T-cell (primary cell): ENCODE measurements at regions of chr1 and their contacts with region 1.

Region 1: DNA sequence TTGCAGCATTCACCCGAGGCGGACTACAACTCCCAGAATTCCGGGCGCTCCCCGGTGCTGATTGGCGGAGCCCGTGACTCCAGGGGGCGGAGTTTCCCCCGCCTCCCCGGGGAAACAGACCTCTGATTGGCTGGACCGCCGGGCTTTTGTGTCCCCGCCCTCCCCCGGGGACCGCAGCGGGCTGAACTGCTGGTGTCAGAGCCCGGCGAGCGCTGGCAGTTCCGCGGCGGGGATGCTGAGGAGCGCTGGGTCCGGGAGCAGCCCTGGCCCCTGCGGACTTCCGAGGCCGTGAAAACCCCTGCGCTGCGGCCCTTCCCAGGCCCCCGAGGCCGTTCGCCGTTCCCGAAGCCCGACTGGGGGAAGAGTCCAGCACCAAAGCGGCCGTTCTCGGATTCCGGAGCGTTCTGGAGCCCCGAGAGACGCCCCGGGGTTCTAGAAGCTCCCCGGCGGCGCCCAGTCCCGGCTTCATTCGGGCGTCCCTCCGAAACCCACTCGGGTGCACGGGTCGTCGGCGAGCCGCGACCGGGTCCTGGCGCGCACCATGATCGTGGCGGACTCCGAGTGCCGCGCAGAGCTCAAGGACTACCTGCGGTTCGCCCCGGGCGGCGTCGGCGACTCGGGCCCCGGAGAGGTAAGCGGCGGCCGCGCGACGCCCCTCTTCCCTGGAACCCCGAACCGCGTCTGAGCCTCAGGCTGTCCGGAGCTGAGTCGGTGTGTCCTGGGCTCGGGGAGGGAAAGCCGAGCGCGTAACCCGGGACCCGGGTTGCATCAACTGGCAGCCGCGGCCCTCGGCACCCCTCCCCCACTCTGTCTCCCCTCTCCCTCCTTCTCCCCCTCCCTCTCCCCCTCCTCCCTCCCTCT is at the start of gene SESN2:
- DNase-seq: peak; percentile 95 to 99 (median 98)
- ATAC-seq: peak; percentile 95 to 99 (median 97)
- H3K4me3 ChIP-seq: peak within 1 kb of the TSS; percentile 75 to 99
- H3K4me3 Mint-ChIP-seq: peak within 1 kb of the TSS; percentile 77 to 82 (median 79)
- H3K27ac ChIP-seq: peak within 1 kb of the TSS; percentile 34
- H3K27ac Mint-ChIP-seq: peak within 1 kb of the TSS; percentile 67 to 79
- H3K4me1 ChIP-seq: peaks cover 19 to 60% of the 10 kb centered on the region in 2 experiments
- H3K4me1 Mint-ChIP-seq: peaks cover 41 to 52% (median 44%) of the 10 kb centered on the region in 3 donors
- H3K27me3 ChIP-seq: peaks cover 0 to 5% of the 10 kb centered on the region in 2 experiments
- H3K27me3 Mint-ChIP-seq: no peaks in the 10 kb centered on the region
- total RNA-seq, gene SESN2: 7.1 to 11.9 (median 8.6) TPM

Region 2: GRCh38 chr1:28175955-28176485 is 83.5 kb before region 1 on chr1:
- CTCF ChIA-PET with region 1: no interaction called
- POLR2A ChIA-PET with region 1: no interaction called
- DNase-seq: no peak
- ATAC-seq: no peak
- H3K4me3 ChIP-seq: no peak overlapping the region
- H3K4me3 Mint-ChIP-seq: no peak overlapping the region
- H3K27ac ChIP-seq: no peak overlapping the region
- H3K27ac Mint-ChIP-seq: no peak overlapping the region
- H3K4me1 ChIP-seq: peaks cover 11 to 34% of the 10 kb centered on the region in 2 experiments
- H3K4me1 Mint-ChIP-seq: peaks cover 29 to 52% (median 36%) of the 10 kb centered on the region in 3 donors
- H3K27me3 ChIP-seq: peaks cover 0 to 20% of the 10 kb centered on the region in 2 experiments
- H3K27me3 Mint-ChIP-seq: no peaks in the 10 kb centered on the region

Region 3: DNA sequence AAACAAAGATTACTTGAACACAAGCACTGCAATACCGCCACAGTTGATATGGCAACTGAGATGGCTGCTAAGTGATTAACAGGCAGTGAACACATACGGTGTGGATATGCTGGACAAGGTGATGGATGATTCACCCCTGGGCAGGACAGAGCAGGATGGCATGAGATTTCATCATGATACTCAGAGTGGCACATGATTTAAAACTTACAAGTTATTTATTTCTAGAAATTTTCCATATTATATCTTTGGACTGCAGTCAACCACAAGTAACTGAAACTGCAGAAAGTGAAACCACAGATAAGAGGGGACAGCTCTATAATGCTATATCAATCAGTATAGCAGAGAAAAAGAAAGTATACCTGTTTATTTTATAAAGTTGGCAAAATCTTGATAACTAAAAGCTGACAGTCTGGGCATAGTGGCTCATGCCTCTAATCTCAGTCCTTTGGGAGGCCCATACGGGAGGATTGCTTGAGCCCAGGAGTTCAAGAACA is 157.9 kb after region 1 on chr1:
- CTCF ChIA-PET with region 1: no interaction called
- POLR2A ChIA-PET with region 1: interaction called in 1 of 2 experiments, 12 read pairs
- DNase-seq: peak in 1 of 35 experiments; percentile 20
- ATAC-seq: peak in 2 of 4 experiments; percentile 46 to 51
- H3K4me3 ChIP-seq: no peak overlapping the region
- H3K4me3 Mint-ChIP-seq: peak overlapping the region; percentile 23 to 59 (median 31)
- H3K27ac ChIP-seq: no peak overlapping the region
- H3K27ac Mint-ChIP-seq: peak overlapping the region in 1 of 2 donors; percentile 46
- H3K4me1 ChIP-seq: peaks cover 0 to 6% of the 10 kb centered on the region in 2 experiments
- H3K4me1 Mint-ChIP-seq: peaks cover 16 to 20% (median 16%) of the 10 kb centered on the region in 3 donors
- H3K27me3 ChIP-seq: no peaks in the 10 kb centered on the region
- H3K27me3 Mint-ChIP-seq: no peaks in the 10 kb centered on the region

Region 4: DNA sequence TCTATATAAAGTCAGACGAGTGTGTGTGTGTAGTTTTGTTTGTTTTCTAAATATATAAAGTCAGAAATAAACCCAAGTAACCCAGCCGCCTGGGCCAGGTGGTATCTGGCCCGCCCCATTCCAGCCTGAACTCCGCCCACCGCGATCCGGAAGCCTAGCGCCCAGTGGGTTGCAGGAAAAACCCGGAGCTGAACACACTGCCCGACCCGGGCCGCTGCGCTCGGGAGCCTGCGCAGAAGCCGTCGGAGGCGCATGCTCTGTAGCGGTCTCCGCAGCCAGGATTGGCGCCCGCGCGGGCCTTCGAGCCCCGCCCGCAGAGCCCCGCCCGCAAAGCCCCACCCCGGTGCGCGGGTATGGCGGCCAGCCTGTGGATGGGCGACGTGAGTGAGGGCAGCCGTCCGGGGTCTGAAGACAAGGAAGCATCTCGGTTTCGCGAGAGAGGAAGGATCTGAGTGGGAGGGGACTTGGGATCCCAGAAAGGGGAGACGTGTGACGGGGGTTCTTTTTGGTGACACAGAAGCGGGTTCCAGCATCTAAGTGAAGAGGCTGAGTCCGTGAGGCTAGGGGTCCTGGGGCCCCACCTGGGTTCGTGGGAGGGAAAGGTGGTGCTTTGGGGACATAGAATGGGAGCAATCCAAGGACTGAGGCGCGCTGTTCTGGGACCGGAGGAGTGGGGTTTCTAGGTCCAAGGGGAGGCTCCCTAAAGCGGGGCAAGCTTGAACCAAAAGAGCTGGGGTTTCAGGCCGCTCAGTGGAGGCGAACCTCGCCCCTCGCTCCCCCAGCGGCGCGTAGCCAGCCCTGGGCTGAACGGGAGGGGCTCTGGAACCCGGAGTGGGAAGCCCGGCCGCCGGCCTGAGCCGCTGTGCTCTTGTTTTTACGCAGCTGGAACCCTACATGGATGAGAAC is 293.5 kb after region 1 on chr1 and contains the start of gene TRNAU1AP:
- CTCF ChIA-PET with region 1: no interaction called
- POLR2A ChIA-PET with region 1: interaction called in 1 of 2 experiments, 17 read pairs
- DNase-seq: peak; percentile 92 to 98 (median 96)
- ATAC-seq: peak; percentile 93 to 97 (median 95)
- H3K4me3 ChIP-seq: peak within 1 kb of the TSS; percentile 88 to 89
- H3K4me3 Mint-ChIP-seq: peak within 1 kb of the TSS; percentile 91 to 99 (median 98)
- H3K27ac ChIP-seq: peak within 1 kb of the TSS; percentile 77
- H3K27ac Mint-ChIP-seq: peak within 1 kb of the TSS; percentile 95 to 97
- H3K4me1 ChIP-seq: peaks cover 2 to 20% of the 10 kb centered on the region in 2 experiments
- H3K4me1 Mint-ChIP-seq: peaks cover 22 to 27% (median 26%) of the 10 kb centered on the region in 3 donors
- H3K27me3 ChIP-seq: no peaks in the 10 kb centered on the region
- H3K27me3 Mint-ChIP-seq: no peaks in the 10 kb centered on the region
- total RNA-seq, gene TRNAU1AP: 28.6 to 47.6 (median 41.3) TPM